ENCODE measurements at regions of chr6 and their contacts with region 1.

Region 1: GRCh38 chr6:18122124-18123093 is at the start of gene NHLRC1:
- DNase-seq: peak; percentile 89
- ATAC-seq: peak; percentile 99
- H3K4me3 ChIP-seq: peak within 1 kb of the TSS in 4 of 5 experiments; percentile 36 to 62 (median 59)
- H3K4me3 Mint-ChIP-seq: peak within 1 kb of the TSS; percentile 93
- H3K27ac ChIP-seq: no peak within 1 kb of the TSS
- H3K27ac Mint-ChIP-seq: peak within 1 kb of the TSS; percentile 77
- H3K4me1 ChIP-seq: peaks cover 0 to 14% of the 10 kb centered on the region in 2 donors
- H3K4me1 Mint-ChIP-seq: peaks cover 16% of the 10 kb centered on the region
- H3K27me3 ChIP-seq: no peaks in the 10 kb centered on the region
- H3K27me3 Mint-ChIP-seq: peaks cover 6% of the 10 kb centered on the region
- CTCF ChIP-seq: peak; percentile 73
- total RNA-seq, gene NHLRC1: 1.0 and 1.1 TPM in 2 replicates

Region 2: DNA sequence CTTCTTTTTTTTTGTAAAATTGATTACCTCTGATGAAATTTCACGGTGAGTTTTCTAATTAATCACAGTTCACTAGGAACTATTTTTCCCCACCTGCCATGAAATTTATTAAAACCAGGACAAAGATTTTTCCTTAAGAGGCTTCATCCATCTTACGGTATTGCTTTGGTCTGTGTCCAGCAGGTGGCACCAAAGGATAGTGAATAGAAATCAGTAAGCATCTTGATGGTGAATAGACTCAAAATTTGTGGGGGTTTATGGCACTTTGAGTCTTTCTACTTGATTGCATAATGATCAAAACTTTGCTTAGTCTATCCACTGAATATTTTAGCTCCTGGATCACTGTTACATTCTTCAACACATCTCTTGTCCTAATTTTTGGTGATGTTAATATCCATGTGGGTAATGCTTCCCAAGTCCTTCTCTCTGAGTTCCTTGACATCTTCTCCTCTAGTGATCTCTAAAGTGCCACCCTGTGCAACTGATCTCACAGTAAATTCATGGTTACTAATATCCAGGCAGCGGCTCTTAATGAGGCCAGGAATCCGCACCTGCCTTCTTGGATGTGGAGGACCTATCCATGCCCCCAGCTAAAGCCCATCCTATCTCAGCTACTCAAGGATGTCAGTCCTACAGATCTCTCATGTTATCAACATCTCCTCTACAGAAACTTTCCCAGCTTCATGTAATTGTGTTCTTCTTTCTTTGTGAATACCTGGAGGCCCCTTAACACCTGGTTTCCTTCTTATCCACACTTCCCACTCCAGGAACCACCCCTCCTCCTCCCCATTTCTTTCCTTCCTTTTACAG is 966.1 kb before region 1 on chr6:
- CTCF ChIA-PET with region 1: no interaction called
- POLR2A ChIA-PET with region 1: no interaction called
- intact Hi-C with region 1: loop called (anchors 5 kb)
- DNase-seq: peak; percentile 70
- ATAC-seq: no peak
- H3K4me3 ChIP-seq: no peak overlapping the region
- H3K4me3 Mint-ChIP-seq: no peak overlapping the region
- H3K27ac ChIP-seq: no peak overlapping the region
- H3K27ac Mint-ChIP-seq: no peak overlapping the region
- H3K4me1 ChIP-seq: no peaks in the 10 kb centered on the region
- H3K4me1 Mint-ChIP-seq: no peaks in the 10 kb centered on the region
- H3K27me3 ChIP-seq: no peaks in the 10 kb centered on the region
- H3K27me3 Mint-ChIP-seq: peaks cover 12% of the 10 kb centered on the region
- CTCF ChIP-seq: peak; percentile 90

Region 3: GRCh38 chr6:17584241-17584803 is 538.1 kb before region 1 on chr6:
- CTCF ChIA-PET with region 1: no interaction called
- POLR2A ChIA-PET with region 1: no interaction called
- intact Hi-C with region 1: loop called (anchors 5 kb)
- DNase-seq: peak; percentile 49
- ATAC-seq: peak; percentile 50
- H3K4me3 ChIP-seq: no peak overlapping the region
- H3K4me3 Mint-ChIP-seq: no peak overlapping the region
- H3K27ac ChIP-seq: no peak overlapping the region
- H3K27ac Mint-ChIP-seq: no peak overlapping the region
- H3K4me1 ChIP-seq: no peaks in the 10 kb centered on the region
- H3K4me1 Mint-ChIP-seq: no peaks in the 10 kb centered on the region
- H3K27me3 ChIP-seq: peaks cover 0 to 3% (median 0%) of the 10 kb centered on the region in 4 experiments
- H3K27me3 Mint-ChIP-seq: peaks cover 7% of the 10 kb centered on the region
- CTCF ChIP-seq: peak; percentile 82

Region 4: DNA sequence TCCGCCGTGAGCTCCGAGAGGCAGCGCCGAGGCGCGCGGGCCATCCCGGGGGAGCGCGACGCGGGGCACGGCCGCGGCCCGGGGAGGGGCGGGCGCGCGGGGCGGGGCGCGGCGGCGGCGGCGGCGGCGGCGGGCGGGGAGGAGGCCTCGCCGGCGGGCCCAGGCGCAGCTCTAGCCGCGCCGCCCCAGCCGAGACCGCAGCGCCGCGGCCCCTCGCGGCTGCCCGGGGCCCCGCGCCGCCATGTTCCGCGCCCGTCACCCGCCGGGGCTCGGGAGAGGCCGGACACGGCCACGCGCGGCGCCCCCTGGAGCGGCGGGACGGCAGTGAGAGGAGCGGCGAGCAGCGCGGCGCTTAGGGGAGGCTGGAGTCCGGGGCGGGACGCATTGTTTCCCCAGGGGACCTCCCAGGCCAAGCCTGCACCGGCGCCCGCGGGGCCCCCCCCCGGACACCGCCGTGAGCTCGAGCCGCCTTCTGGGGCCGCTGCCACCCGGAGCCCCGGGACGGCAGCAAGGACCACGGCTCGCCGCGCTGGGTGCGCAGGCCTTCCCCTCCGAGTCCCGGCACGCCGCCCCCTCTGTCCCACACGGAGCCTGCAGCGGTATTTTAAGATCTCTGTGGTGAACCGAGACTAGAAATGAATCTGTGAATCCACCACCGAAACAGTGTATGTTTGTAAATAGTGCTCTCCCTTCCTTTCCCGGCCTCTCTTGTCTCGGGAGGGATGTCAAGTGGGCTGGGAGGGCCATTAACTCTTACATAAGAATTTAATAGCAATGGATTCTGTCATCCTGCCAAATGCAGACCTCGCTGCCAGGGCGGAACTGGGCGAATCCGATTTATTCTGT is 134.6 kb before region 1 on chr6 and contains the start of gene KIF13A:
- CTCF ChIA-PET with region 1: no interaction called
- POLR2A ChIA-PET with region 1: no interaction called
- intact Hi-C with region 1: loop called (anchors 2 kb)
- DNase-seq: peak; percentile 81
- ATAC-seq: peak; percentile 74
- H3K4me3 ChIP-seq: peak within 1 kb of the TSS; percentile 41 to 85 (median 63)
- H3K4me3 Mint-ChIP-seq: peak within 1 kb of the TSS; percentile 97
- H3K27ac ChIP-seq: peak within 1 kb of the TSS in 1 of 2 donors; percentile 58
- H3K27ac Mint-ChIP-seq: peak within 1 kb of the TSS; percentile 92
- H3K4me1 ChIP-seq: peaks cover 19 to 23% of the 10 kb centered on the region in 2 donors
- H3K4me1 Mint-ChIP-seq: peaks cover 40% of the 10 kb centered on the region
- H3K27me3 ChIP-seq: peaks cover 0 to 13% (median 5%) of the 10 kb centered on the region in 4 experiments
- H3K27me3 Mint-ChIP-seq: no peaks in the 10 kb centered on the region
- CTCF ChIP-seq: peak; percentile 35
- total RNA-seq, gene KIF13A: 21.3 and 23.4 TPM in 2 replicates

Region 5: DNA sequence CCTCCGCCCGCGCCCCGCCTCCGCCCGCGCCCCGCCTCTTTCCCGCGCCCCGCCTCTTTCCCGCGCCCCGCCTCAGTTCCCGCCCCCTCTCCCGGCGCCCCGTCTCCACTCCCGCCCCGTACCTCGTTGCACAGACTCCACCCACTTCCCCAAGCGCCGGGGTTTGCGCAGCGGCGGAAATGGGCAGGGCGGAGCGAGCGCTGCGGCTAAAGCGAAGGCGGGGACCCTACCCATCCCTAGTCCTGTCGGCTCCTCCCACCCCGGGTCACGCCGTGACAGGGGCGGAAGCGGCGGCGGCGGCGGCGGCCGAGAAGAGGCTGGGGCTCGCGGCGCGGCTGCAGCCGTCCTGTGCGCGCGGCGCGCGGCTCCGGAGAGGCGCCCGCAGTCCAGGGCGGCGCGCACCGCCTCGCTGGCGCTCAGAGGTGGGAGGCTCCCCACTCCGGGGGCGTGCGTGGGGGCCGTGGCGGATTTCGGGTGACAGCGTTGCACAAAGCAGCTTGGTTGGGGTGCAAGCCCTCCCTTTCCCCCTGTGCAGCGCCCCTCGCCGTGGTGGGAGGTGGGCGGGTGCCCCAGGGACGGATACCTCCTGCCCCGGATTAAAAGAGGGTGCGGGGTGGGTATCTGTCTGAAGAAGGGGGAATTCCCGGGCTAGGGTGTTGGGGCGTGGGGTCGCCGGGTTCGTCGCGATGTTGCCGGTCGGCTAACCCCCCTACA is 32.9 kb after region 1 on chr6 and contains the start of gene KDM1B:
- CTCF ChIA-PET with region 1: interaction called, 10 read pairs
- POLR2A ChIA-PET with region 1: interaction called, 4 read pairs
- intact Hi-C with region 1: loop called (anchors 1 kb)
- DNase-seq: peak; percentile 99
- ATAC-seq: peak; percentile 92
- H3K4me3 ChIP-seq: peak within 1 kb of the TSS; percentile 75 to 99 (median 89)
- H3K4me3 Mint-ChIP-seq: peak within 1 kb of the TSS; percentile 99
- H3K27ac ChIP-seq: peak within 1 kb of the TSS; percentile 83 to 87
- H3K27ac Mint-ChIP-seq: peak within 1 kb of the TSS; percentile 98
- H3K4me1 ChIP-seq: peaks cover 25 to 29% of the 10 kb centered on the region in 2 donors
- H3K4me1 Mint-ChIP-seq: peaks cover 24% of the 10 kb centered on the region
- H3K27me3 ChIP-seq: no peaks in the 10 kb centered on the region
- H3K27me3 Mint-ChIP-seq: no peaks in the 10 kb centered on the region
- CTCF ChIP-seq: no peak
- total RNA-seq, gene KDM1B: 10.0 and 10.9 TPM in 2 replicates

Region 6: GRCh38 chr6:18171871-18172270 is 49.5 kb after region 1 on chr6:
- CTCF ChIA-PET with region 1: no interaction called
- POLR2A ChIA-PET with region 1: no interaction called
- intact Hi-C with region 1: no loop called
- DNase-seq: no peak
- ATAC-seq: no peak
- H3K4me3 ChIP-seq: no peak overlapping the region
- H3K4me3 Mint-ChIP-seq: no peak overlapping the region
- H3K27ac ChIP-seq: no peak overlapping the region
- H3K27ac Mint-ChIP-seq: no peak overlapping the region
- H3K4me1 ChIP-seq: no peaks in the 10 kb centered on the region
- H3K4me1 Mint-ChIP-seq: peaks cover 8% of the 10 kb centered on the region
- H3K27me3 ChIP-seq: no peaks in the 10 kb centered on the region
- H3K27me3 Mint-ChIP-seq: no peaks in the 10 kb centered on the region
- CTCF ChIP-seq: no peak

Region 7: DNA sequence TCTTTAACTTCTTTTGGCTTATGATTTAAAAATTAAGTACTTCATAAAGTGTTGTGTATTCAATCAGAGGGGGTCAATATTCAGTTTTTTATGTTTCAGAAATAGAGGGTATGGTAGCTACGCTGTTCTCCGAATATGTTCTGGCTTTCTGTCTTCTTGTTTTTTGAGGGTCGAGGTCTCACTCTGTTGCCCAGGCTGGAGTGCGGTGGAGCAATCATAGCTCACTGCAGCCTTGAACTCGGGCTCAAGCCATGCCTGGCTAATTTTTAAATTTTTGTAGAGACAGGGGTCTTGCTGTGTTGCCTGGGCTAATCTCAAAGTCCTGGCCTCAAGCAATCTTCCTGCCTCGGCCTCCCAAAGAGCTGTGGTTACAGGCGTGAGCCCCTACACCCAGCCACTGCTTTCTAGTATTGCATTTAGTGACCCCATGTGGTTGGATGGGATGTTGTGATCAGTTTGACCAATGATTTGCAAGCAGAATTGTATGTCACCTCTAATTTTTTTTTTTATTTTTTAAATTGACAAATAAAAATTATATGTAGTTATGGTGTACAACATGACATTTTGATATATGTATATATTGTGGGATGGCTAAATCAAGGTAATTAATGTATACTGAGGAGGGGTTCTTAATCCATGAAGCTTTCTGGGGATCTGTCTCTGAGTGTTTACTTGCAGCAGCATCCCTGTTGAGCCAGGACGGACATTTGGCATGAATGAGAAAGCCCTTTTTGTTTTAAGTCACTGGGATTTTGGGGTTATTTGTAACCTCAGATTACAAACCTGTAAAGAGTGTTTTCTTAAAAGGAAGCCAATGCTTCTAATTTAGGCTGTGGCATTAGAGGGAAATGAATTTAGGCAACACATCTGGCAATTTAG is 180.4 kb after region 1 on chr6:
- CTCF ChIA-PET with region 1: interaction called, 11 read pairs
- POLR2A ChIA-PET with region 1: no interaction called
- intact Hi-C with region 1: no loop called
- DNase-seq: no peak
- ATAC-seq: no peak
- H3K4me3 ChIP-seq: no peak overlapping the region
- H3K4me3 Mint-ChIP-seq: no peak overlapping the region
- H3K27ac ChIP-seq: no peak overlapping the region
- H3K27ac Mint-ChIP-seq: no peak overlapping the region
- H3K4me1 ChIP-seq: no peaks in the 10 kb centered on the region
- H3K4me1 Mint-ChIP-seq: no peaks in the 10 kb centered on the region
- H3K27me3 ChIP-seq: no peaks in the 10 kb centered on the region
- H3K27me3 Mint-ChIP-seq: peaks cover 6% of the 10 kb centered on the region
- CTCF ChIP-seq: no peak

Region 8: GRCh38 chr6:18503593-18504231 is 381.3 kb after region 1 on chr6:
- CTCF ChIA-PET with region 1: interaction called, 23 read pairs
- POLR2A ChIA-PET with region 1: no interaction called
- intact Hi-C with region 1: no loop called
- DNase-seq: peak; percentile 74
- ATAC-seq: peak; percentile 79
- H3K4me3 ChIP-seq: peak overlapping the region in 3 of 5 experiments; percentile 22 to 41 (median 40)
- H3K4me3 Mint-ChIP-seq: peak overlapping the region; percentile 74
- H3K27ac ChIP-seq: no peak overlapping the region
- H3K27ac Mint-ChIP-seq: no peak overlapping the region
- H3K4me1 ChIP-seq: peaks cover 7 to 17% of the 10 kb centered on the region in 2 donors
- H3K4me1 Mint-ChIP-seq: peaks cover 12% of the 10 kb centered on the region
- H3K27me3 ChIP-seq: no peaks in the 10 kb centered on the region
- H3K27me3 Mint-ChIP-seq: no peaks in the 10 kb centered on the region
- CTCF ChIP-seq: peak; percentile 97

Measured in B cell (primary cell).